Motor neuron (in vitro differentiated cells): ENCODE measurements at regions of chr2 and their contacts with region 1.

Region 1: DNA sequence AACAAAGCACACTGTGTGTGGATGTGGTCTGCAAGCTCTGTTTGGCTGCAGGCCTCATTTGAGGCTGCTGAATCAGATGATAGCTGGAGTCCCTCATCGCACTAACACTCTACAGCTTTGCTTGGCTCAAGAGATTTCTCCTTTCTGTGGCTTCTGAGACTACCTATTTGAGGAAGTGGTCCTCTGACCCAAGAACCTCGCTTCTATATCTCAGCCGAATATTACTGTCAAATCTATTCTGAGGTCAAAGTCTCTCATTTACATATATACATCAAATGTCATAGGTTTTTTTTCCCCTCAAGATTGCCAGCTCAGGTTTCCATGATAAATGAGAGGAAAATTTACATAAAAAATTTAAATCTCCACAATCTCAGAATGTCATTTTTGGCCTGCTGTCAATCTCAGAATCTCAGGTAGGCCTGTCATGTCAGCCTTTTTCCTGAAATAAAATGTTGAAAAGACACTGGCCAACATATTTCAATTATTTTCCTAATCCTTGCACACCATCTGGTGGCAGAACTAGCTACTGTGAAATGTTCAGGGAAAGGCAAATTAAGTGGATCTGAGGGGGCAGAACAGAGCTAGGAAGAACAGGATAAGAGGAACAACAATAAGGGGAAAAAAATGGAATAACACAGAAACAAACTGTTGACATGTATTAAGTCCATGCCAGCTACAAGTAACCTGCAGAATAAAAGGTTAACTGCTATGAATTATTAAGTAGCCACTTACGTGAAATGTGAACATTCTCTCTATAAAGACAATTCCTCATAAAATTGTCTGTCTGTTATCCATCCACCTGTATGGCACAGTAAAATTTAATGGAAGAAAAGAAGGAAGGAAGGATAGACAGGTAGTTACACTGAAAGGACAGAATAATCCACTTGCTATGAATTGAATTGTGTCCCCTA is 39.3 kb downstream of the AP1S3 start:
- ATAC-seq: peak; percentile 23 to 79 (median 66)
- H3K4me3 ChIP-seq: no peak overlapping the region
- H3K27ac ChIP-seq: no peak overlapping the region
- H3K4me1 ChIP-seq: no peaks in the 10 kb centered on the region

Region 2: DNA sequence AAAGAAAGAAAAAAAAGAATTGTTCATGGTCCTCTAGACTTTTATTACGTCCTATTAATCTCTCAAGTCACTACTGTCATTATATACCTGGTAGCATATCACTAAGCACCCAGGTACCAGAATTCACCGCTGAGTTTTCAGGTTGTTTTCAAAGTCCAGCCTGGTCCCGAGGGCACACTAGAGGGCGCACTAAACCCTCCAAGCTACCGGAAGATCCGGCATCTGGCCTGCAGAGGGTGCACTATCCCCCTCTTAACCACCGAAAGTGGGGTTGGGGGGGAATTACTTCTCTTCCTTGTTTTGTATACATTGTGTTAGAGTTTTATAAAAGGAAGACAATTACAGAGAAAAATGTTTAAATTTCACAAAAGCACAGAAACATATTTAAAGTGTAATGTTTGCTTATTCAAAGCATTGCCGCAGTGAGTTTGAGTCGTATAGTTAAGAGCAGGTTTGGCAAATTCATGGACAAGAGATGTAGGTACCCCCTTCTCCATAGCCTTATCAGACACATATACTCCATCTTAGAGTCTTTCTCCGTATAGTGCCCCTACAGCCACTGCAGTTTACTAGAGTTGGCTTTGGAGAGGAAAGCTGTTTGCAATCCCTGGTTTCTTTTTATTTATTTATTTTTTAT is 1107.4 kb before region 1 on chr2:
- in situ Hi-C with region 1: loop called in 1 of 9 experiments (anchors 25 kb)
- ATAC-seq: peak in 7 of 8 experiments; percentile 41 to 96 (median 73)
- H3K4me3 ChIP-seq: no peak overlapping the region
- H3K27ac ChIP-seq: no peak overlapping the region
- H3K4me1 ChIP-seq: no peaks in the 10 kb centered on the region

Region 3: DNA sequence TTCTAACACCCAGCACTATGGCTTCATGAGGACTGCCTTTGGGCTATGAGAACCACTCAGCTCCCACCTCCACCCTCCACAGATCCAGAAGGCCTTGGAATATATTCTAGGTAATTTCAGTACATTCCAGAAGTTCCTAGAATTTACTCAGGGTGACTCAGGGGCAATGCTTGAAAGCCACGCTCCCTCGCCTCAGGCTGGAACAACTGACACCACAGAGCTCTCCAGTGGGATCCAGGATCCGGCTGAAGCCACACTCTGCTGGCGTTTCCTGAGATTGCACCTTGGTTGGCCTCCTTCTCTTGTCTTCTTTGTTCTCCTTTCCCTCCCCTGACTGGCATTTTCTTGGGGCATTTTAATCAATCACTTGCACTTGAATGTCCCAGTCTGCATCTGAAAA is 838.7 kb before region 1 on chr2:
- in situ Hi-C with region 1: loop called in 4 of 9 experiments (anchors 25 kb)
- ATAC-seq: peak in 3 of 8 experiments; percentile 83 to 97 (median 97)
- H3K4me3 ChIP-seq: no peak overlapping the region
- H3K27ac ChIP-seq: no peak overlapping the region
- H3K4me1 ChIP-seq: no peaks in the 10 kb centered on the region

Region 4: GRCh38 chr2:222976521-222977076 is 821.5 kb before region 1 on chr2:
- in situ Hi-C with region 1: loop called in 7 of 9 experiments (anchors 10 to 25 kb)
- ATAC-seq: peak in 3 of 8 experiments; percentile 39 to 52 (median 47)
- H3K4me3 ChIP-seq: no peak overlapping the region
- H3K27ac ChIP-seq: no peak overlapping the region
- H3K4me1 ChIP-seq: peaks cover under 1 to 10% of the 10 kb centered on the region in 2 donors

Region 5: GRCh38 chr2:222982010-222982908 is 815.8 kb before region 1 on chr2:
- in situ Hi-C with region 1: loop called in 3 of 9 experiments (anchors 10 to 25 kb)
- ATAC-seq: peak; percentile 98 to 100 (median 100)
- H3K4me3 ChIP-seq: no peak overlapping the region
- H3K27ac ChIP-seq: peak overlapping the region; percentile 45 to 57
- H3K4me1 ChIP-seq: peaks cover 14 to 18% of the 10 kb centered on the region in 2 donors